ENCODE measurements at regions of chr16 and their contacts with region 1.

Region 1: GRCh38 chr16:75305364-75306098 is 54.1 kb upstream of the BCAR1 start:
- DNase-seq: peak; percentile 92
- H3K4me3 Mint-ChIP-seq: peak overlapping the region; percentile 63
- H3K27ac Mint-ChIP-seq: peak overlapping the region; percentile 99
- H3K4me1 Mint-ChIP-seq: peaks cover 63% of the 10 kb centered on the region
- H3K27me3 Mint-ChIP-seq: no peaks in the 10 kb centered on the region
- CTCF ChIP-seq: no peak

Region 2: GRCh38 chr16:75234856-75235696 is 70.5 kb before region 1 on chr16:
- CTCF ChIA-PET with region 1: interaction called, 10 read pairs
- intact Hi-C with region 1: loop called (anchors 5 kb)
- DNase-seq: no peak
- H3K4me3 Mint-ChIP-seq: no peak overlapping the region
- H3K27ac Mint-ChIP-seq: peak overlapping the region; percentile 1
- H3K4me1 Mint-ChIP-seq: peaks cover 29% of the 10 kb centered on the region
- H3K27me3 Mint-ChIP-seq: no peaks in the 10 kb centered on the region
- CTCF ChIP-seq: no peak

Region 3: DNA sequence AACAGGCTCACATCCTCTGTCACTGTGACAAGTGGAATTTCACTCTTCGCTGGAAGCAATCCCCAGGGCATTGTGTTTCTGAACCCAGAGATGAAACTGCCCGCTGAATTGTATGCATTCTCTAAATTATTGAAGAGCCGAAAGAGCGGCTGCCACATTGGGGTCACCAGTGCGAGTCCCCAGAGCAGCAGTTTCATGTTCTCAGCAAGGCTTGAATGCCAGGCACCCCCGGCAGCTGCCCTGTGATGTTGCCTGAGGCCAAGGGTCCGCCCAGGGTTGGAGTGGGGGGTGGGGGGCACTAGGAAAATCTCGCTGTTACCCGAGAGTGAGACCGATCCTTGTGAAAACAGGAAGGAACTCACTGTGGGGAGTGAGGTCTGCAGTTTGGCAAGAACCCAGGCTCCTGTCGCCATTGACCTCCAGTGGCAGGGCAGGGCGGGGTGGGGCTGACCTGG is 33.4 kb before region 1 on chr16:
- CTCF ChIA-PET with region 1: interaction called, 3 read pairs
- intact Hi-C with region 1: loop called (anchors 2 kb)
- DNase-seq: no peak
- H3K4me3 Mint-ChIP-seq: no peak overlapping the region
- H3K27ac Mint-ChIP-seq: no peak overlapping the region
- H3K4me1 Mint-ChIP-seq: peaks cover 26% of the 10 kb centered on the region
- H3K27me3 Mint-ChIP-seq: no peaks in the 10 kb centered on the region
- CTCF ChIP-seq: no peak

Region 4: GRCh38 chr16:75342308-75342829 is 36.8 kb after region 1 on chr16:
- CTCF ChIA-PET with region 1: interaction called, 4 read pairs
- intact Hi-C with region 1: loop called (anchors 1 kb)
- DNase-seq: peak; percentile 7
- H3K4me3 Mint-ChIP-seq: peak overlapping the region; percentile 40
- H3K27ac Mint-ChIP-seq: peak overlapping the region; percentile 24
- H3K4me1 Mint-ChIP-seq: peaks cover 48% of the 10 kb centered on the region
- H3K27me3 Mint-ChIP-seq: no peaks in the 10 kb centered on the region
- CTCF ChIP-seq: no peak

Measured in Calu3 (cell line).